Naive thymus-derived CD4-positive, alpha-beta T cell (primary cell): ENCODE measurements at regions of chr6 and their contacts with region 1.

Region 1: GRCh38 chr6:57089687-57090460 is at the start of gene ZNF451:
- DNase-seq: peak; percentile 88 to 97 (median 94)
- ATAC-seq: peak; percentile 96
- H3K4me3 ChIP-seq: peak within 1 kb of the TSS; percentile 64
- H3K4me3 Mint-ChIP-seq: peak within 1 kb of the TSS; percentile 85 to 94 (median 90)
- H3K27ac ChIP-seq: peak within 1 kb of the TSS; percentile 78
- H3K27ac Mint-ChIP-seq: peak within 1 kb of the TSS; percentile 79 to 94 (median 90)
- H3K4me1 ChIP-seq: peaks cover 24% of the 10 kb centered on the region in 2 donors
- H3K4me1 Mint-ChIP-seq: peaks cover 22 to 44% (median 34%) of the 10 kb centered on the region in 7 donors
- H3K27me3 ChIP-seq: no peaks in the 10 kb centered on the region
- H3K27me3 Mint-ChIP-seq: no peaks in the 10 kb centered on the region
- total RNA-seq, gene ZNF451: 63.4 to 116 (median 96.6) TPM

Region 2: DNA sequence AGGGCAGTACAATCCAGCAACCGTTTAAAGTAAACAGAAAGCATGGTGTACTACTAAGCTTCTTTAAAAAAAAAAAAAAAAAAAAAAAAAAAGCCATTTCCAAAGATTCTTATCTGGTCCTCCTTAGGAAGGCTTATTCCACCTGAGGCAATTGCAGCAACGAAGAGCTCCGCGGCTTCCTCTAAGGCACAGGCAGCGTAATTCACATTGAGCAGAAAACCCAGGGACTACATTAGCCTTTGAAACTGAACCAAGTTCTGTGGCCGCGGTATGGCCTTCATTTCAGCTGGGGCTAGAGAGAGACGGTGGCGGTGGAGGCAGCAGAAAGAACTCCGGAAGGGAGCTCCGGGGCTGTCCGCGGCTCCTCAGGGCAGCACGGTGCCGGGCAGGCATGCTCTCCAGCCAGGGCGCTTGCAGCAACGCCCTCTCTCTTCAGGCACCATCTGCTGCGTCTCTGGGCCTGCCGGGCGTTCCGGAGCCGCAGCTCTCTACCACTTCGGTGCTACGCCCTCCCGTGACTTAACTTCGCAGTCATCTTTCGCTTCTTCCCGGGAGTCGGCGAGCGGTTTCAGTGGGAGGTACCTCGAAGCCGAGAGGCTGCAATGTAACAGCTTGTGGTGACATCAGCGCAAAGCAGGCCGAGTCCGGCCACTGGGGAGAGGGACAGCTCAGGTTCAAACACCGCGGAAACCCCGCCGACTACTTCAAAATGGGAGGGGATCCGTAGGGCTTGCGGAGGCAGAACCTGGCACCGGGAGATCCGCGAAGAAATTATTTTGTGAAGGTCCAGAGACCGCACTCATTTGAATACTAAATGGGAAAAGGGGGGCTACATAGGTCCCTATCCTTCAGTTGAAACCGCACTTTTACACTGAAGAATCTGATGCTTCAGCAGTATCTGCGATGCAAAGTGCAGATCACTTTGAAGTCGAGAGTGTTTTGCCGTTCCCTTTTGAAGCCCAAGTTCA is 547.2 kb before region 1 on chr6:
- CTCF ChIA-PET with region 1: no interaction called
- POLR2A ChIA-PET with region 1: no interaction called
- intact Hi-C with region 1: loop called in 1 of 2 experiments (anchors 5 kb)
- DNase-seq: peak; percentile 32 to 74 (median 59)
- ATAC-seq: peak; percentile 90
- H3K4me3 ChIP-seq: peak overlapping the region; percentile 69
- H3K4me3 Mint-ChIP-seq: no peak overlapping the region
- H3K27ac ChIP-seq: peak overlapping the region; percentile 38
- H3K27ac Mint-ChIP-seq: no peak overlapping the region
- H3K4me1 ChIP-seq: peaks cover 0 to 8% of the 10 kb centered on the region in 2 donors
- H3K4me1 Mint-ChIP-seq: peaks cover 0 to 2% (median 0%) of the 10 kb centered on the region in 7 donors
- H3K27me3 ChIP-seq: no peaks in the 10 kb centered on the region
- H3K27me3 Mint-ChIP-seq: peaks cover 0 to 3% (median 0%) of the 10 kb centered on the region in 5 donors

Region 3: GRCh38 chr6:57048577-57048976 is 41.3 kb before region 1 on chr6:
- CTCF ChIA-PET with region 1: no interaction called
- POLR2A ChIA-PET with region 1: interaction called, 3 read pairs
- intact Hi-C with region 1: loop called (anchors 1 kb)
- DNase-seq: no peak
- ATAC-seq: no peak
- H3K4me3 ChIP-seq: no peak overlapping the region
- H3K4me3 Mint-ChIP-seq: peak overlapping the region; percentile 46 to 84 (median 68)
- H3K27ac ChIP-seq: no peak overlapping the region
- H3K27ac Mint-ChIP-seq: peak overlapping the region in 6 of 9 donors; percentile 14 to 75 (median 58)
- H3K4me1 ChIP-seq: peaks cover 0 to 9% of the 10 kb centered on the region in 2 donors
- H3K4me1 Mint-ChIP-seq: peaks cover 21 to 41% (median 32%) of the 10 kb centered on the region in 7 donors
- H3K27me3 ChIP-seq: no peaks in the 10 kb centered on the region
- H3K27me3 Mint-ChIP-seq: peaks cover 0 to 24% (median 0%) of the 10 kb centered on the region in 5 donors